ENCODE measurements at regions of chr1 and their contacts with region 1.

Region 1: GRCh38 chr1:206693029-206693428 is 8.3 kb downstream of the MAPKAPK2 start:
- DNase-seq: no peak
- H3K4me3 Mint-ChIP-seq: no peak overlapping the region
- H3K27ac Mint-ChIP-seq: no peak overlapping the region
- H3K4me1 Mint-ChIP-seq: peaks cover 41% of the 10 kb centered on the region
- H3K27me3 Mint-ChIP-seq: no peaks in the 10 kb centered on the region

Region 2: GRCh38 chr1:206651958-206652890 is 40.8 kb before region 1 on chr1:
- CTCF ChIA-PET with region 1: no interaction called
- POLR2A ChIA-PET with region 1: no interaction called
- DNase-seq: no peak
- H3K4me3 Mint-ChIP-seq: no peak overlapping the region
- H3K27ac Mint-ChIP-seq: no peak overlapping the region
- H3K4me1 Mint-ChIP-seq: no peaks in the 10 kb centered on the region
- H3K27me3 Mint-ChIP-seq: peaks cover under 1% of the 10 kb centered on the region

Region 3: GRCh38 chr1:206706298-206706791 is 13.3 kb after region 1 on chr1:
- CTCF ChIA-PET with region 1: interaction called, 11 read pairs
- POLR2A ChIA-PET with region 1: no interaction called
- DNase-seq: no peak
- H3K4me3 Mint-ChIP-seq: no peak overlapping the region
- H3K27ac Mint-ChIP-seq: no peak overlapping the region
- H3K4me1 Mint-ChIP-seq: peaks cover 79% of the 10 kb centered on the region
- H3K27me3 Mint-ChIP-seq: no peaks in the 10 kb centered on the region

Region 4: GRCh38 chr1:206716870-206717673 is 24.0 kb after region 1 on chr1:
- CTCF ChIA-PET with region 1: interaction called, 11 read pairs
- POLR2A ChIA-PET with region 1: interaction called, 5 read pairs
- DNase-seq: peak; percentile 52
- H3K4me3 Mint-ChIP-seq: no peak overlapping the region
- H3K27ac Mint-ChIP-seq: peak overlapping the region; percentile 82
- H3K4me1 Mint-ChIP-seq: peaks cover 78% of the 10 kb centered on the region
- H3K27me3 Mint-ChIP-seq: no peaks in the 10 kb centered on the region